PC-9 (cell line): ENCODE measurements at regions of chr22 and their contacts with region 1.

Region 1: GRCh38 chr22:43346521-43346929 is 3.4 kb upstream of the SCUBE1 start:
- DNase-seq: peak in 1 of 2 experiments; percentile 66
- H3K4me3 ChIP-seq: no peak overlapping the region
- H3K27ac ChIP-seq: no peak overlapping the region
- H3K4me1 ChIP-seq: no peaks in the 10 kb centered on the region
- H3K27me3 ChIP-seq: peaks cover 64% of the 10 kb centered on the region
- CTCF ChIP-seq: peak; percentile 74

Region 2: GRCh38 chr22:41966607-41967240 is 1379.8 kb before region 1 on chr22:
- CTCF ChIA-PET with region 1: interaction called, 14 read pairs
- POLR2A ChIA-PET with region 1: no interaction called
- intact Hi-C with region 1: no loop called
- DNase-seq: peak; percentile 59 to 80
- H3K4me3 ChIP-seq: no peak overlapping the region
- H3K27ac ChIP-seq: no peak overlapping the region
- H3K4me1 ChIP-seq: no peaks in the 10 kb centered on the region
- H3K27me3 ChIP-seq: peaks cover 8% of the 10 kb centered on the region; the same call in 1 of the 2 replicates
- CTCF ChIP-seq: peak; percentile 73

Region 3: GRCh38 chr22:43273902-43274484 is 72.5 kb before region 1 on chr22:
- CTCF ChIA-PET with region 1: interaction called, 37 read pairs
- POLR2A ChIA-PET with region 1: no interaction called
- intact Hi-C with region 1: loop called (anchors 1 kb)
- DNase-seq: peak; percentile 43 to 55
- H3K4me3 ChIP-seq: no peak overlapping the region
- H3K27ac ChIP-seq: no peak overlapping the region
- H3K4me1 ChIP-seq: peaks cover 15% of the 10 kb centered on the region
- H3K27me3 ChIP-seq: peaks cover 25% of the 10 kb centered on the region
- CTCF ChIP-seq: peak; percentile 92

Region 4: DNA sequence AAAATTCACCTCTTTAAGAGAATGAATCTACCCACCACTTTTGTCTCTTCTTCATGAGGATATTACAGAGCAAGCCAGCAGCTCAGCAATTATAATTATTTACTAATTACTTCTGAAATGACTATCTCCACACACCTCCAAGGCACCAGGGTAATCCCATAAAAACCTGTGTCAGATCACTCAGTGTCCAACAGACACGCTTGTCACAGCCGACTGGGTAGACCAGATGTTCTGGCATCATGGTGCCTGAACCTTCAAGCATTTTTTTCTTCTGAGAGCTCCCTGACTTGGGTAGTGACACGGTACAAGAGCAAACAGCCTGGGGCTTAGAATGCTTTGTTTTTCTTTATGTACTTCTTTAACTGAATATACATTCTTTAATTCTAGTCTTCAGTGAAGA is 404.3 kb after region 1 on chr22:
- CTCF ChIA-PET with region 1: interaction called, 13 read pairs
- POLR2A ChIA-PET with region 1: no interaction called
- intact Hi-C with region 1: no loop called
- DNase-seq: no peak
- H3K4me3 ChIP-seq: no peak overlapping the region
- H3K27ac ChIP-seq: no peak overlapping the region
- H3K4me1 ChIP-seq: no peaks in the 10 kb centered on the region
- H3K27me3 ChIP-seq: peaks cover 98% of the 10 kb centered on the region
- CTCF ChIP-seq: no peak